B cell (primary cell): ENCODE measurements at regions of chr17 and their contacts with region 1.

Region 1: DNA sequence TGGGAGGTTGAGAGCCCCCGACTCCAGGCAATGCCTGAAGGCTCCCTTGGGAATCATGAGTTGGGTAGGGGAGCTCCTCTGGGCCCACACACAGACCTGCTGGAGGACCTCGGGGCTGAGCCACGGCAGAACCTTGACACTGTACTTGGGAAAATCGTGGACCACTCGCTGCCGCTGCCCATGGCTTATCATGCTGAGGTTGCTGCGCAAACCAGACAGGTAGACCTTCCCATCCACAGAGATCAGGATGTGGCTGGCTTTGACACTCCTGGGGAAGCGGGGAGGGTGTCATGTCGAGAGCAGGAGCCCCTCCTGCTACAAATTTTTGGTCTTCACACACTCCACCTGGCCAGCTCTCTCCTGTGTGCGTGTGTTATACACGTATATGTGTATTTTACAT is 7.2 kb upstream of the LIMD2 start:
- DNase-seq: no peak
- ATAC-seq: no peak
- H3K4me3 ChIP-seq: no peak overlapping the region
- H3K4me3 Mint-ChIP-seq: no peak overlapping the region
- H3K27ac ChIP-seq: peak overlapping the region in 1 of 2 donors; percentile 75
- H3K27ac Mint-ChIP-seq: peak overlapping the region; percentile 92
- H3K4me1 ChIP-seq: peaks cover 51 to 56% of the 10 kb centered on the region in 2 donors
- H3K4me1 Mint-ChIP-seq: peaks cover 67% of the 10 kb centered on the region
- H3K27me3 ChIP-seq: no peaks in the 10 kb centered on the region
- H3K27me3 Mint-ChIP-seq: no peaks in the 10 kb centered on the region
- CTCF ChIP-seq: no peak

Region 2: DNA sequence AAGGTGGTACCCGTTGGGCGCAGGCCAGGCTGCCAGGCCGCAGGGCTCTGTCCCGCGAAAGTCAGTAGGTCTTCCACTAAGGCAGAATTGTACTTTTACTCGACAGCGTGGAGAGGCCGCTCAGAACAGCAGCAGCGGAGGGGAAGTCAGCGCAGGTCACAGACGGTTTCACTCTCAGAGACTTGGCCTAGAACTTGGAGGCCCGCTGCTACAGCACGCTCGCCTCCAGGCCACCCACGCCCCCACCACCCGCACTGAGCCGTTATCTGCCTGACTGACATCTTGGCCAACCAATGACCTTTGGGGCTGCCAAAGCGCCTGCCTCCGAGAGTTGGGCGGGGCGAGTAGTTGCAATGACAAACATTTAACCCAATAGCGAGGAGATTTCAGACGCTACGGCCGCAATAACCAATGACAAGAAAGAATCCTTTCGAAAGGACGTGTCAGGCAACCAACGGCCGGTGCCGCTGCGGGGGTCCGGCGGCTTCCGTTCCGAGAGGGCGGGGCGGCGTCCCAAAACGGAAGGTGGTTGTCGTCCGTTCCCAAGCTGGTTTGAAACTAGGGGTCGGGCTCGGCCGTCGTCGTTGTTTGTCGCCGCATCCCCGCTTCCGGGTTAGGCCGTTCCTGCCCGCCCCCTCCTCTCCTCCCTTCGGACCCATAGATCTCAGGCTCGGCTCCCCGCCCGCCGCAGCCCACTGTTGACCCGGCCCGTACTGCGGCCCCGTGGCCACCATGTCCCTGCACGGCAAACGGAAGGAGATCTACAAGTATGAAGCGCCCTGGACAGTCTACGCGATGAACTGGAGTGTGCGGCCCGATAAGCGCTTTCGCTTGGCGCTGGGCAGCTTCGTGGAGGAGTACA is 157.0 kb before region 1 on chr17 and contains the start of gene DCAF7:
- CTCF ChIA-PET with region 1: no interaction called
- POLR2A ChIA-PET with region 1: no interaction called
- intact Hi-C with region 1: no loop called
- DNase-seq: peak; percentile 100
- ATAC-seq: peak; percentile 94
- H3K4me3 ChIP-seq: peak within 1 kb of the TSS; percentile 73 to 91 (median 81)
- H3K4me3 Mint-ChIP-seq: peak within 1 kb of the TSS; percentile 87
- H3K27ac ChIP-seq: peak within 1 kb of the TSS; percentile 81 to 95
- H3K27ac Mint-ChIP-seq: peak within 1 kb of the TSS; percentile 94
- H3K4me1 ChIP-seq: peaks cover 41 to 47% of the 10 kb centered on the region in 2 donors
- H3K4me1 Mint-ChIP-seq: peaks cover 44% of the 10 kb centered on the region
- H3K27me3 ChIP-seq: no peaks in the 10 kb centered on the region
- H3K27me3 Mint-ChIP-seq: no peaks in the 10 kb centered on the region
- CTCF ChIP-seq: no peak
- total RNA-seq, gene DCAF7: 84.7 and 84.8 TPM in 2 replicates

Region 3: GRCh38 chr17:63675607-63676413 is 31.3 kb before region 1 on chr17:
- CTCF ChIA-PET with region 1: interaction called, 22 read pairs
- POLR2A ChIA-PET with region 1: no interaction called
- intact Hi-C with region 1: no loop called
- DNase-seq: no peak
- ATAC-seq: no peak
- H3K4me3 ChIP-seq: no peak overlapping the region
- H3K4me3 Mint-ChIP-seq: no peak overlapping the region
- H3K27ac ChIP-seq: peak overlapping the region in 1 of 2 donors; percentile 10
- H3K27ac Mint-ChIP-seq: no peak overlapping the region
- H3K4me1 ChIP-seq: peaks cover 0 to 5% of the 10 kb centered on the region in 2 donors
- H3K4me1 Mint-ChIP-seq: peaks cover 8% of the 10 kb centered on the region
- H3K27me3 ChIP-seq: no peaks in the 10 kb centered on the region
- H3K27me3 Mint-ChIP-seq: no peaks in the 10 kb centered on the region
- CTCF ChIP-seq: no peak

Region 4: DNA sequence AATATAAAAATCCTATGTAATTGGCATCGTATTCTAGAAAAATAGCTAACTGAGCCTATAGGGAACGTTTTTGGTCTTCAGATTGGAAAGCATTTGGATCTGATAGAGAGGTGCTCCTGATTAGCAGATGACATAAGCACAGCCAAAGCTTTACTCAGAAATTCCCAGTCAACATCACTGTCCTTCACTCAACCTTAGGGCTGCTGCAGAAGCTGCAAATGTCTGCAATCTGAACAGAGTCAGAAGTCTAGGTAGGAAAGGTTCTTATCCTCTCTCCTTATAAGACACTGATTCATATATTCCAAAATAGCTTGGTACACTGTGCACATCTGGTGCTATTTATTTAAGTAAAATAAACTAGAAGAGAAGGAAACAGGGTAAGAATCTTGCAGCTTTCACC is 15.3 kb after region 1 on chr17:
- CTCF ChIA-PET with region 1: interaction called, 21 read pairs
- POLR2A ChIA-PET with region 1: no interaction called
- intact Hi-C with region 1: no loop called
- DNase-seq: no peak
- ATAC-seq: no peak
- H3K4me3 ChIP-seq: no peak overlapping the region
- H3K4me3 Mint-ChIP-seq: no peak overlapping the region
- H3K27ac ChIP-seq: no peak overlapping the region
- H3K27ac Mint-ChIP-seq: no peak overlapping the region
- H3K4me1 ChIP-seq: no peaks in the 10 kb centered on the region
- H3K4me1 Mint-ChIP-seq: no peaks in the 10 kb centered on the region
- H3K27me3 ChIP-seq: no peaks in the 10 kb centered on the region
- H3K27me3 Mint-ChIP-seq: no peaks in the 10 kb centered on the region
- CTCF ChIP-seq: no peak

Region 5: DNA sequence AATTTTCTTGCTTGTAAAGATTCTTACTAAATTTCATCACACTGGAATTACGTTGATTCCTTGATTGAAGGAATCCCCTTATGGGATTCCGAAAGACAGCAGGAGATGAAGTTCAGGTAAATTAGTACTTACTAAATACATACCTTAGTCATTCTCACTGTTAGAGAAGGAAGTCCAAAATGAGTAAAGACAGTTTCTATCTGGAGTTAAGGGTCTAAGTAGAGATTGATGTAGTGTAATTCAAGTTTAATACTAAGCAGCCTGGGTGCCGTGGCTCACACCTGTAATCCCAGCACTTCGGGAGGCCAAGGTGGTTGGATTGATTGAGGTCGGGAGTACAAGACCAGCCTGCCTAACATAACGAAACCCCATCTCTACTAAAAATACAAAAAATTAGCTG is 76.4 kb after region 1 on chr17:
- CTCF ChIA-PET with region 1: no interaction called
- POLR2A ChIA-PET with region 1: no interaction called
- intact Hi-C with region 1: no loop called
- DNase-seq: no peak
- ATAC-seq: no peak
- H3K4me3 ChIP-seq: no peak overlapping the region
- H3K4me3 Mint-ChIP-seq: no peak overlapping the region
- H3K27ac ChIP-seq: no peak overlapping the region
- H3K27ac Mint-ChIP-seq: peak overlapping the region; percentile 26
- H3K4me1 ChIP-seq: peaks cover 0 to 6% of the 10 kb centered on the region in 2 donors
- H3K4me1 Mint-ChIP-seq: peaks cover 41% of the 10 kb centered on the region
- H3K27me3 ChIP-seq: no peaks in the 10 kb centered on the region
- H3K27me3 Mint-ChIP-seq: no peaks in the 10 kb centered on the region
- CTCF ChIP-seq: no peak